ENCODE measurements at regions of chr16 and their contacts with region 1.

Region 1: DNA sequence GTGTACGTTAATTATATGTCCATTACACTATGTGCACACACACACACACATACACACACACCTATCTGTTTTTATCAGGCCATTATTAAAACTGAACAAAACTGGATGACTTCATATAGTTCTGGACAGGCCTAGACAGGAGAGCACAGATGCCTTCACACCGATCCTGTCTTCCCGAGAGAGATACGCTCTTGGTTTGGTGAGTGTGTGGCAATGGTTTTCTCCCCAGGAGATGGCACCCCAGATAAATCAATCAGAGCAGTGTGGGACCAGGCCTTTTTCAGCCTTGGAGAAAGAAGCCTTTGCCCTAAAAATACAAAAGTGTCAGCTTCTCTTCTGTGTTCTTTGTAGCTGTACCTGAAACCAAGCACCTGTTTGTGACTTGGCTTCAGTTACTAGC is 83.7 kb downstream of the CPPED1 start:
- DNase-seq: no peak
- ATAC-seq: no peak

Region 2: DNA sequence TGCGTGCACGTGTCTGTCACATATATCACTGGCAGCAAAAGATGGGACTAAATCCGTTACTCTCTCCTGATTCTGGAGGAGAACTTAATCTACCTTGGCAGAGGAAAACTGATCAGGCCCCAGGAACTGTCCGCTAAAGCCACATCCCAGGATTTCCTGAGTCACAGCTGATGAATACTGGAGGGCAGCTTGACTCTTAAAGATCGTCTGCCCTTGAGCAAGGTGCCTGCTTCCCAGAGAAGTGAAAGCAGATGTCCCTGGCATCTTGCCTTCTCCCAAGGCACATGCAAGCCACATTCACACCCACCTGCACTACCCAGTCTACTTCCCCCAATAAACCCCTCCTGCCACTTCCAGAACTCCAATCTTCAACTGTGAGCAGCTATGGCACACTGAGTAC is 16.0 kb before region 1 on chr16:
- intact Hi-C with region 1: no loop called
- DNase-seq: no peak
- ATAC-seq: no peak

Region 3: DNA sequence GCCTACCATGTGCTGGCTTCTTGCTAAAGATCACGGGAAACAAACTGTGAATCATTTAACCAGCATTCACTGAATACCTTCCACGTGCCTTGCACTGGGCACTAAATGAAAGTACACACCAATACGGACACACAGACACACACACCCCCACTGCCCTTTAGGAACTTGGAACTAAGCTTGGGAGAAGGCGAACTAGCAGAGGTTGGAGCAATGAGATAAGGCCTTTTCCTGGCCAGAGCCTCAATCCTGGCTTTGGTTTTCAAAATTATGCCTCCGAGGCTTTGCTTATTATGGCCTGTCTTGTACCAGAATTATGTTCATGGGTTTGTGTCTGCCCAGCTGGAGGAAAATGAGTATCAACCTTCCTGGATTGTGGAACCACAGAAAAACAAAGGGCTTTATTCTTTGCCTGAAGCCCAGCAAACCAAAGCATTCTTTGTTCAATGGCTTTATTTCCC is 51.4 kb after region 1 on chr16:
- intact Hi-C with region 1: loop called in 1 of 2 experiments (anchors 10 kb)
- DNase-seq: no peak
- ATAC-seq: no peak

Measured in left colon (tissue), 2 donors.